ENCODE measurements at regions of chr6 and their contacts with region 1.

Region 1: GRCh38 chr6:150068720-150069648 is at the start of gene ULBP3:
- DNase-seq: peak; percentile 82 to 84
- H3K4me3 ChIP-seq: peak within 1 kb of the TSS; percentile 74
- H3K27ac ChIP-seq: no peak within 1 kb of the TSS
- H3K4me1 ChIP-seq: peaks cover 24% of the 10 kb centered on the region
- H3K27me3 ChIP-seq: no peaks in the 10 kb centered on the region
- CTCF ChIP-seq: peak; percentile 56
- total RNA-seq, gene ULBP3: 3.8 and 4.2 TPM in 2 replicates

Region 2: DNA sequence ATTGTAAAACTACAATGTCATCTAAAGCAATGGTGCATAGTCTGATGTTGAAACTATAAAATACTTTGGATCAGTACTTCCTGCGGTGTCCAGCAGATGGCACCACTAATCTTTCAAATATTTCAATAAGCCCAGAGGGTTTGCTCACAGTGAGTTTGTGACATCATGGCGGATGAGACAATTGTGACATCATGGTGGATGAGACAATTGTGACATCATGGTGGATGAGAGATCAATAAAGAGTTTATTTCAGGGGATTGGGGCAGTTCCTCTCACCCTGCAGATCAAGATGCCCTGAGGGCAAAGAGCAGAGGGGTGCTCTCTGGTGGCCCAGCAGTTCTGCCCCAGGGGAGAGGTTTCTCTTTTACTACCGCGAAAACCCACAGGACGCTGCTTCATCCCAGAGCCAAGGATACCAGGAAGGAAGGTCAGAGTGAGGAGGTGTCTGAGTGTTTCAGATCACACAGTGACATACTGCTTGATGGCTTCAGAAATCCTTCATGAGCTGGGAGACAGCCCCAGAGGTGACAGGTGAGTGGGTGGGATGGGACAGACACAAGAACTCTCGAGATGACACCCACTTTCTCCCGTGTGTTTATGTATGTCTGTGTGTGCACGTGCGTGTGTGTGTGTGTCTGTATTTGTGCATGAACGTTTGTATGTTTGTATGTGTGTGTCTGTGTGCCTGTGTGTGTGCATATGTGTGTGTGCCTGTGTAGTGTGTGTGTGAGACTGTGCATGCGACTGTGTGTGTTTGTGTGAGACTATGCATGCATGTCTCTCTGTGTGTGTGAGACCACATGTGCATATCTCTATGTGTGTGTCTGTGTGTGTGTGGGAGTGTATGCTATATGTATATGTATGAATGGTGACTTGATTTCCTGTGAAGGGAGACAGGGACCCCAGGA is 134.5 kb before region 1 on chr6:
- CTCF ChIA-PET with region 1: no interaction called
- POLR2A ChIA-PET with region 1: no interaction called
- intact Hi-C with region 1: loop called (anchors 1 kb)
- DNase-seq: peak; percentile 29 to 50
- H3K4me3 ChIP-seq: no peak overlapping the region
- H3K27ac ChIP-seq: no peak overlapping the region
- H3K4me1 ChIP-seq: peaks cover 24% of the 10 kb centered on the region
- H3K27me3 ChIP-seq: no peaks in the 10 kb centered on the region
- CTCF ChIP-seq: peak; percentile 92

Region 3: DNA sequence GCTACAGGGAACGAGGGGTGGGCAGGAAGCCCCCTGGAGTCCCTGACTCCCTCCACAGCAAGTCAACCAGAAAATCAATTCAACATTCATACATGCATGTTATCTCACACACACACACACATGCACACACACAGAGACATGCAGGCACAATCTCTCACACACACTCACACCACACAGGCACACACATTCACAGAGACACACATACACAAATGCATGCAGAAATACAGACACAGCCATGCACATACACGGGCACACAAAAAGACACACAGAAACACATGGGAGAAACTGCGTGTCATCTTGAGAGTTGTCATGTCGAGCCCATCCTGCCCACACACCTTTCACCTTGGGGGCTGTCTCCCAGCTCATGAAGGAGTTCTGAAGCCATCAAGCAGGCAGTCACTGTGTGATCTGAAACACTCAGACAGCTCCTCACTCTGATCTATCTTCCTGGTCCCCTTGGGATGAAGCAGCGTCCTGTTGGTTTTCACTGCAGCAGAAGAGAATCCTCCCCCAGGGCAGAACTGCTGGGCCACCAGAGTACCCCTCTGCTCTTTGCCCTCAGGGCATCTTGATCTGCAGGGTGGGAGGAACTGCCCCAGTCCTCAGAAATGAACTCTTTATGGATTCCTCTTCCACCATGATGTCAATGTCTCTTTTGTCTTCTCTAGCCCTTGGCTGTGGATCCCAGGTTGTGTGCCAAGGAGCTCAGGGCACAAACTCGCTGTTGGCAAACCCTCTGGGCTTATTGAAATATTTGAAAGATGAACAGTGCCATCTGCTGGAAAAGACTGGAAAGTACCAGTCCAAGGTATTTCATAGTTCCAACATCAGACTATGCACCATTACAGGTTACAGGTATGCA is 52.4 kb before region 1 on chr6:
- CTCF ChIA-PET with region 1: no interaction called
- POLR2A ChIA-PET with region 1: interaction called, 6 read pairs
- intact Hi-C with region 1: loop called (anchors 2 kb)
- DNase-seq: peak; percentile 42 to 60
- H3K4me3 ChIP-seq: no peak overlapping the region
- H3K27ac ChIP-seq: no peak overlapping the region
- H3K4me1 ChIP-seq: no peaks in the 10 kb centered on the region
- H3K27me3 ChIP-seq: no peaks in the 10 kb centered on the region
- CTCF ChIP-seq: peak; percentile 75

Region 4: DNA sequence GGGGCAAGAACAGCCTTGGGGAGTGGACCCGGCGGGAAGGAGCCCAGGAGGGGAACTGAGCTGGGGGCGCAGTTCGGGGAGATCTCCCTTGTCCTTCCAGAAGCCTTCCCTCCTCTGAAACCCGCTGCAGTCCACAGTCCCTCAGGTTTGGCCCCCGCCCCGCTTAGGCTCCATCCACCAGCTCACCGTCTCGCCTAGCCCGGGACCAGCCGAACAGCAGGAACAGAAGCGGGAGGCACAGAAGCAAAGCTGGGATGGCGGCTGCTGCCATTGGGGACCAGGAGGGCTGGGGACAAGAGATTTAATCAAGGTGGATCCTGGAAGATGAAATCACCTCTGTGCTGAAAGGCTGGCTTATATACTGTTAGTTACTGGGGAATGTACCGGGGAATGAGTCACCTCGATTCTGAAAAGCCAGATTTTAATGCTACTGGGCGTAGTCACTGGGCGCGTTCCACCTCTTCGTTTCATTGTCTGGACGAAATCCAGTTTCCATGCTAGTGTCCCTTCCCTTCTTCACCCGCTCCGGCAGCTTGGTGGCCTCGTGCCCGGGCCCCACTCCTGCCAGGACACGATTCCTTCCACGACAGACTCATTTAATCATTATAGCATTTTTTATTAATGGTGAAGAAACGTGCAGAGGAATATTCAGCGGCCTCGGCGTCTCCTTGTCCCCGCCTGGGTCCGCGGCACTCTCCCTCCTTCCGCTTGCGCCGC is 43.6 kb before region 1 on chr6 and contains the start of gene RAET1L:
- CTCF ChIA-PET with region 1: no interaction called
- POLR2A ChIA-PET with region 1: no interaction called
- intact Hi-C with region 1: loop called (anchors 2 kb)
- DNase-seq: peak; percentile 59 to 81
- H3K4me3 ChIP-seq: peak within 1 kb of the TSS; percentile 53; the same call in 1 of the 2 replicates
- H3K27ac ChIP-seq: peak within 1 kb of the TSS; percentile 43; the same call in 1 of the 2 replicates
- H3K4me1 ChIP-seq: peaks cover 19% of the 10 kb centered on the region
- H3K27me3 ChIP-seq: no peaks in the 10 kb centered on the region
- CTCF ChIP-seq: no peak
- total RNA-seq, gene RAET1L: 1.2 and 2.8 TPM in 2 replicates

Region 5: GRCh38 chr6:150055131-150055530 is 13.9 kb before region 1 on chr6:
- CTCF ChIA-PET with region 1: interaction called, 12 read pairs
- POLR2A ChIA-PET with region 1: no interaction called
- intact Hi-C with region 1: no loop called
- DNase-seq: no peak
- H3K4me3 ChIP-seq: no peak overlapping the region
- H3K27ac ChIP-seq: no peak overlapping the region
- H3K4me1 ChIP-seq: no peaks in the 10 kb centered on the region
- H3K27me3 ChIP-seq: peaks cover 58% of the 10 kb centered on the region
- CTCF ChIP-seq: no peak

Region 6: GRCh38 chr6:150334790-150335783 is 266.1 kb after region 1 on chr6:
- CTCF ChIA-PET with region 1: no interaction called
- POLR2A ChIA-PET with region 1: no interaction called
- intact Hi-C with region 1: loop called (anchors 2 kb)
- DNase-seq: peak; percentile 20 to 38
- H3K4me3 ChIP-seq: no peak overlapping the region
- H3K27ac ChIP-seq: no peak overlapping the region
- H3K4me1 ChIP-seq: peaks cover 13% of the 10 kb centered on the region
- H3K27me3 ChIP-seq: no peaks in the 10 kb centered on the region
- CTCF ChIP-seq: peak; percentile 92

Region 7: DNA sequence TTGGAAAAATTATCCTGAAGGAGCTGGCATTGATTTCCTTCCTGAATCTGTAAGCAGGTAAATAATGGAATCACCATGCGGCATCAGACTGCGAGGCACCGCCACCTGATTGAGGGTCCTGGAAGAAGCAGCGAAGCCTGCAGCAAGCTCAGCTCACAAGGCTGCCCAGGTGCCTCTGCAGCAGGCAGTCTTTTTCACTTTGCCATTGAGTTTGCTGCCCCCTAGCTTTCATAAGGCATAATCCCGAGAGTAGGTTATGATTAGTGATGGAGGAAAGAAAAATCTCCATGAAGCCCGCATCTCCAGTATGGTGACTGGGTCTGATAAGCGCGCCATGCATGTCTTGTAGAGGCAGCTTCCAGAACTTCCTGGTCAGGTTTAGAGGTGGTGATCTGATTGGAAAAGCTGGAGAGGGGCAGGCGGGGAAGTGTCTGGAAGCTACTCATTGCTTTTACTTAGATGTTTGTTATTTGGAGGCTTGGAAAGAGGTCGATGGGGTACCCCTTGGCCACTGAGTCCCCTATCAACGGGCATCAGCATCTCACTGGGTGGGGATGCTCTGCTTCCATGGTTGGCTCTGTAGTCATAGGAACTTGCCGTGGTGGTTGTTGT is 326.5 kb after region 1 on chr6:
- CTCF ChIA-PET with region 1: interaction called, 3 read pairs
- POLR2A ChIA-PET with region 1: no interaction called
- intact Hi-C with region 1: loop called (anchors 5 kb)
- DNase-seq: peak in 1 of 2 experiments; percentile 60
- H3K4me3 ChIP-seq: no peak overlapping the region
- H3K27ac ChIP-seq: no peak overlapping the region
- H3K4me1 ChIP-seq: peaks cover 12% of the 10 kb centered on the region
- H3K27me3 ChIP-seq: no peaks in the 10 kb centered on the region
- CTCF ChIP-seq: peak; percentile 82